ENCODE measurements at regions of chr11 and their contacts with region 1.

Region 1: DNA sequence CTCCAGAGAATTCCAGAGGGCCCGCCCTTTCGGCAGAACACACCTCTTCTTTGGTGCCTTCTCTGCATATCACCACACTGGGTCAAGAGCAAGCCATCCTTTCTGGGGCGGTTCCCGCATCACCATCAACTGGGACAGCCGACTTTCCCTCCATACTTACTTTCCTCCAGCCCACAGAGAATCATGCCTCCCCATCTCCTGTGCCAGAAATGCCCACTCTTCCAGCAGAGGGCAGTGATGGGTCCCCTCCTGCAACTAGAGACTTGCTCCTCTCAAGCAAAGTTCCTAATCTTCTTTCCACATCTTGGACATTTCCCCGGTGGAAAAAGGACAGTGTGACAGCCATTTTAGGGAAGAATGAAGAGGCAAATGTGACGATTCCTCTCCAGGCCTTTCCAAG is 157.7 kb downstream of the C11orf91 start:
- DNase-seq: peak; percentile 44 to 62 (median 50)
- ATAC-seq: peak; percentile 87
- H3K4me3 ChIP-seq: no peak overlapping the region
- H3K27ac ChIP-seq: no peak overlapping the region
- H3K4me1 ChIP-seq: no peaks in the 10 kb centered on the region
- H3K27me3 ChIP-seq: peaks cover 2 to 34% of the 10 kb centered on the region in 2 experiments; a peak in 3 of 5 replicates
- CTCF ChIP-seq: peak; percentile 65 to 71 (median 70)
- EP300 ChIP-seq: no peak
- POLR2A ChIP-seq: no peak
- RAD21 ChIP-seq: peak; percentile 46 to 64

Region 2: DNA sequence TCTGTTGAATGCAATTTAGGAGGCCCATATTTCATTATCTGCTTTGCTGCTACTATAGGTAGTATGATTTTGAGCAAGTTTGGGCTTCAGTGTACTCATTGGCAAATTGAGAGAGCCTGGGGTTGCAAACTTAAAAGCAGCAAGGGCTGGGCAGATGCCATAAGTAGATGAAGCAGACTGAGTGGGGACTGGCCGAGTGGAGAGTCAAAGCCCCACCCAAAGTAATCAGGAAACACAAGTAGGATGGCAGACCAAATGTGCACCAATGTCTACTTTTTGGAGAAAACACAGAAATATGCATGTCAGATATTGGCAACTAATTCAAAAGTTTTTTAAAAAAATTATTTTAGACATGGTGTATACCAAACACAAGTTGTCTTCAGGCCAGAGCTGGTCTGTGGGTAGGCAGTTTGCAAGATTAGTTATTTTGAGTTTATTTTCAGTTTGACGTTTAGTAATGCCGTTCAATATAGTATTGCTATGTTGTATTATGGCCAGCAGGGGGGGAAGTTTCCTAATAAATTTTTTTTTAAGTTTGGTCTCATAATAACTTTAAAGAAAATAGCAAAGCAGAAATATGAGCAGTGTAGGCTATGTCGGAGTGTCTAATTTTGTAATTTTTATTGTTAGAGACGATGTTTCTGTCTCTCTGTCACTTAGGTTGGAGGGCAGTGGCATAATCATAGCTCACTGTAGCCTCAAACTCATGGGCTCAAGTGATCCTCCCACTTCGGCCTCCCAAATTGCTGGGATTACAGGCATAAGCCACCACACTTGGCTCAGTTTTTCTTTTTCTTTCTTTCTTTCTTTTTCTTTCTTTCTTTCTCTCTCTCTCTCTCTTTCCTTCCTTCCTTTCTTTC is 180.6 kb before region 1 on chr11:
- CTCF ChIA-PET with region 1: no interaction called
- POLR2A ChIA-PET with region 1: no interaction called
- in situ Hi-C with region 1: no loop called
- intact Hi-C with region 1: loop called (anchors 5 kb)
- DNase-seq: peak in 2 of 4 experiments; percentile 27 to 45
- ATAC-seq: peak; percentile 81
- H3K4me3 ChIP-seq: no peak overlapping the region
- H3K27ac ChIP-seq: no peak overlapping the region
- H3K4me1 ChIP-seq: no peaks in the 10 kb centered on the region
- H3K27me3 ChIP-seq: peaks cover 0 to 2% of the 10 kb centered on the region in 2 experiments; a peak in 3 of 5 replicates
- CTCF ChIP-seq: peak; percentile 30 to 73 (median 53); a peak in 5 of 6 replicates
- EP300 ChIP-seq: no peak
- POLR2A ChIP-seq: no peak
- RAD21 ChIP-seq: peak; percentile 62 to 73

Region 3: GRCh38 chr11:33490842-33491370 is 52.0 kb before region 1 on chr11:
- CTCF ChIA-PET with region 1: no interaction called
- POLR2A ChIA-PET with region 1: no interaction called
- in situ Hi-C with region 1: no loop called
- intact Hi-C with region 1: no loop called
- DNase-seq: no peak
- ATAC-seq: no peak
- H3K4me3 ChIP-seq: no peak overlapping the region
- H3K27ac ChIP-seq: no peak overlapping the region
- H3K4me1 ChIP-seq: no peaks in the 10 kb centered on the region
- H3K27me3 ChIP-seq: no peaks in the 10 kb centered on the region; a peak in 1 of 5 replicates
- CTCF ChIP-seq: no peak
- EP300 ChIP-seq: no peak
- POLR2A ChIP-seq: no peak
- RAD21 ChIP-seq: no peak

Region 4: DNA sequence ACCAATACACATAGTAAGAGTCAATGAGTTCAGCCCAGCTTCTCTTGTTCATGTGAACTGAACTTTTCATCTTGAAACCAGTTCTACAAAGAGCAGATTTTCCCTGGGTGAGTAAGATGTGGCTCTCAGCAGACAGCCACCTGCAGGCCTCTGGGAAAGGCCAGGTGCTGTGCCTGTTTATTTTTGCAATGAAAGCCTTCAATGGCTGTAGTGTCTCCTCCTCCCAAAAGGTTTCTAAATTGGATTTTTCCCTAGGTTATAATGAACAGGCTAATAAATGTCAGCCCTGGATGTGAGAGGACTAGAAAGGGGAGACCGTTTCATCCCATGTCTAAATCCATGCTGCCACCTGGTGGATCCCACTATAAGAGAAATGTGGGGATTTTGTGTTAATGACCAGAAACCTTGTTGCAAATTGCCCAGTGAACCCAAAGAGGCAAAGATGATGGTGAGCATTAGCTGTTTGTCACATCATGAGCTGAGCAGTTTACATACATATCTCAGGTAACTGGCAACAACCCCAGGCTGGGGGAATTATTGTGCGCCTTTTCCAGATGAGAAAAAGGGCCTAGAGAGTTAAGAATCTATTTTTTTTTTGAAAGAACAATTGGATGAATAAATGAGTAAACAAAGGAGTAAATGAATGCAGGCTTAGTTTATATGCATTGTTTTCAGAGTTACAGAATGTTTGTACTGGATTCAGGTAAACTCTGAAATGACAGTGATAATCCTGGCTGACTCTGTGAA is 145.0 kb after region 1 on chr11:
- CTCF ChIA-PET with region 1: no interaction called
- POLR2A ChIA-PET with region 1: interaction called, 3 read pairs
- in situ Hi-C with region 1: loop called (anchors 5 kb)
- intact Hi-C with region 1: loop called (anchors 2 kb)
- DNase-seq: peak; percentile 40 to 72 (median 59)
- ATAC-seq: peak; percentile 80
- H3K4me3 ChIP-seq: no peak overlapping the region
- H3K27ac ChIP-seq: no peak overlapping the region
- H3K4me1 ChIP-seq: peaks cover 5 to 10% of the 10 kb centered on the region in 2 experiments; a peak in 4 of 5 replicates
- H3K27me3 ChIP-seq: peaks cover 3 to 18% of the 10 kb centered on the region in 2 experiments; a peak in 4 of 5 replicates
- CTCF ChIP-seq: peak; percentile 77 to 89 (median 79)
- EP300 ChIP-seq: no peak
- POLR2A ChIP-seq: no peak
- RAD21 ChIP-seq: peak; percentile 70 to 94

Region 5: DNA sequence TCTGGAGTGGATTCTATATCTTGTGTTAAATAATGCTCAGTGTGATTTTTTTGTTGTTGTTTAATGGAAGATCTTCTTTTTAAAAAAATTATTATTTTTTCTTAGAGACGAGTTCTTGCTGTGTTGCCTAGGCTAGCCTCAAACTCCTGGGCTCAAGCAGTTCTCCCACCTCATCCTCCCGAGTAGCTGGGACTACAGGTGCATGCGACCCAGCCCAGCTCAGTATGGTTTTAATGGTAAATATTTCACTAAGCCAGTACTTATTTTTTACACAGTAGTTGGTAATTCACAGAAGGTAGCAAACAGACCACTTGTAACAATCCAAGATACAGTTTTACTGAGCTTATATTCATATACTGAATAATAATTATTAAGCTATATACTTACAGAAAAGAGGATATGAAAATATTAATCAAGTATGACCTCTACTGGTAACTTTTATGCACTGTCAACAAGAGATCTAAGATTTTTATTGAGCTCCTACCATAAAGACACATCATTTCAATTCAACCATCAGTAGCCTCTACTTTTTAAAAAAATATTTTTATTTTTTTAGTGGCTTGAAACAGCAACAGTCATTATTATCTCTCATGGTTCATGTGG is 199.4 kb after region 1 on chr11:
- CTCF ChIA-PET with region 1: interaction called, 5 read pairs
- POLR2A ChIA-PET with region 1: no interaction called
- in situ Hi-C with region 1: no loop called
- intact Hi-C with region 1: loop called (anchors 5 kb)
- DNase-seq: no peak
- ATAC-seq: peak; percentile 54
- H3K4me3 ChIP-seq: no peak overlapping the region
- H3K27ac ChIP-seq: no peak overlapping the region
- H3K4me1 ChIP-seq: peaks cover 4 to 15% of the 10 kb centered on the region in 2 experiments; a peak in 3 of 5 replicates
- H3K27me3 ChIP-seq: no peaks in the 10 kb centered on the region
- CTCF ChIP-seq: peak; percentile 28 to 75 (median 35); a peak in 3 of 6 replicates
- EP300 ChIP-seq: no peak
- POLR2A ChIP-seq: no peak
- RAD21 ChIP-seq: peak; percentile 73 to 79

Measured in K562 (cell line).